ENCODE measurements at regions of chr12 and their contacts with region 1.

Region 1: DNA sequence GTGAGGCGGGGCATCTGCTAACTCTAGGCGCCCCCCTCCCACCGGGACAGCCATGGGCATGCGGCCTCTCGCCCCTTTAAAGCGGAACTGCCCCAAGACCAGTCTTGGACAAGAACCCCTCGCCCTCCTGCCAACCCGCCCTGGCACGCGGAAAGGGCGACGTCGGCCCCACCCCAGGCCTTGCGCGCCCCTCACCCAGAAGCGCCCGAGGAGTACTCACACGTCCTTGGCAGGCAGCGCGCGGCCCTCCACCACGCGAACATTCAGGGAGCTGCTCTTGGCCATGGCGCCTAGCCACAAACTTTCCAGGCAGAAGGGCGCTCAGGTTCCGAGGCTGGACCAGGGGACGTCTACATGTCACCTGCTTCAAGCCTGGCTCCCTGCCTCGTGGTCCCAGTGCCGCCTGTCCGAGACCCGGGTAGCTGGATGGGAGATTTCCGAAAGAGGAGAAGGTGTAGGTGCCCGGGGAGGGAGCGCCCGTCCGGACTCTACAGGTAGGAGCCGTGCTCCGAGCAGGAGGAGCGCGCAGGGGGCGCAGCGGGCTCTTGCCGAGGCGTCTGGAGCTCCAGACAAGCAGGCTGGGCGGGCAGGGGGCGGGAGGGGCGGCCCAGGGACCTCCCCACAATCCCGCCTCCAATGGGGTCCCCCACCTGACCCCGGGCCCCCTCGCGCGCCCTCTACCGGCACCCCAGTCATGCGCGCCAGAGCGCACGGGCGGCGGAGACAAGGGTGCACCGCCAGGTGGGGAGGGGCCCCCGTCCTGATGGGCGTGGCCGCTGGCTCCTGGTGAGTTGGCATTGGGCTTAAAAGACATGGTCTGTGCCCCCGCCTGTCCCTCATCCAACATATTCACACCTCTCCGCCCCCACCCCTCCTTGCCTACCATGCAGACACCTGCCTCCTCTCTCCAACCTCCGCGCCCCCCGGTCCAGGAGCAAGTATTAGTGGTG is at the start of gene RASAL1:
- DNase-seq: peak; percentile 93
- H3K4me3 ChIP-seq: peak within 1 kb of the TSS; percentile 90
- H3K27ac ChIP-seq: peak within 1 kb of the TSS; percentile 68
- H3K4me1 ChIP-seq: peaks cover 68% of the 10 kb centered on the region
- CTCF ChIP-seq: peak; percentile 78
- total RNA-seq, gene RASAL1: 69.1 and 89.1 TPM in 2 replicates

Region 2: GRCh38 chr12:113098446-113098896 is 37.0 kb before region 1 on chr12:
- CTCF ChIA-PET with region 1: interaction called, 10 read pairs
- POLR2A ChIA-PET with region 1: interaction called, 3 read pairs
- intact Hi-C with region 1: loop called (anchors 2 kb)
- DNase-seq: peak; percentile 82
- H3K4me3 ChIP-seq: no peak overlapping the region
- H3K27ac ChIP-seq: peak overlapping the region; percentile 88
- H3K4me1 ChIP-seq: peaks cover 75% of the 10 kb centered on the region
- CTCF ChIP-seq: peak; percentile 91

Measured in OCI-LY7 (cell line).